Activated CD4-positive, alpha-beta memory T cell treated with anti-CD3 and anti-CD28 coated beads for 36 hours (primary cell): ENCODE measurements at regions of chr1 and their contacts with region 1.

Region 1: DNA sequence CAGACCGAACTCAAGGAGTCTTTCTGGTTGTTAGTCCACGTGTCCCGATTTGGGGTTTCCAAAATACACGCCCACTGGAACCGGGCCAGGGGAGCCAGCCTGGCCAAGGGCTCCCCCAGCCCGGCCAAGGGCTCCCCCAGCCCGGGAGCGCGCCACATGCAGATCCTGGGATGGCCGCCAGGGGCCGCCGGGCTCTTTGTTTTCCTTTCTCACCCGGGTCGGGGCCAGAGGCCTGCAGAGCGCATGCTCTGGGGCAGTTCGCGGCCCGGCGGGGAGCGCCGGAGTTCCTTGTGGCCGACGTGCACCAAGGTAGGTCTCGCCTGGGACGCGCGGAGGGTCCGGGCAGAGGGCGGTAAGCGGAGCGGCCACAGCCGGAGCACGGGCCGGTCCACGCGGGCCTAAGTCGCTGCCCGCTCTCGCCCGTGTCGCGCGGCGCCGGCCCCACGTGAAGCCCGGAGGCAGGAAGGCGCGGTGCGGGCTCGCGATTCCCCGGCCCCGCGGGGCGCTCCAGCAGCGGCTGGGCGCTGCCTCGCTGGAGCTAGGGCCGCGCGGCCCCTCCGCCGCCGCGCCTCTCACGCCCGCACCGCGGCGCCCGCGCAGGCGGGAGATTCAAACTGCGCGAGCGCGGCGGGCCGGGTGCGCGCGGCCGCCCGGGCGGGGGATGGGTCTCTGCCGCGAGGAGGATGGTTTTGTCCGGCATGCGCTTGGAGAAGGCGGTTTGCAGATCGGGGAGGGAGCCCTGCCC is 12.3 kb downstream of the RCC1 start:
- DNase-seq: peak; percentile 93
- H3K4me3 Mint-ChIP-seq: peak overlapping the region; percentile 88
- H3K27ac Mint-ChIP-seq: peak overlapping the region; percentile 93
- H3K4me1 Mint-ChIP-seq: peaks cover 41% of the 10 kb centered on the region
- H3K27me3 Mint-ChIP-seq: no peaks in the 10 kb centered on the region

Region 2: DNA sequence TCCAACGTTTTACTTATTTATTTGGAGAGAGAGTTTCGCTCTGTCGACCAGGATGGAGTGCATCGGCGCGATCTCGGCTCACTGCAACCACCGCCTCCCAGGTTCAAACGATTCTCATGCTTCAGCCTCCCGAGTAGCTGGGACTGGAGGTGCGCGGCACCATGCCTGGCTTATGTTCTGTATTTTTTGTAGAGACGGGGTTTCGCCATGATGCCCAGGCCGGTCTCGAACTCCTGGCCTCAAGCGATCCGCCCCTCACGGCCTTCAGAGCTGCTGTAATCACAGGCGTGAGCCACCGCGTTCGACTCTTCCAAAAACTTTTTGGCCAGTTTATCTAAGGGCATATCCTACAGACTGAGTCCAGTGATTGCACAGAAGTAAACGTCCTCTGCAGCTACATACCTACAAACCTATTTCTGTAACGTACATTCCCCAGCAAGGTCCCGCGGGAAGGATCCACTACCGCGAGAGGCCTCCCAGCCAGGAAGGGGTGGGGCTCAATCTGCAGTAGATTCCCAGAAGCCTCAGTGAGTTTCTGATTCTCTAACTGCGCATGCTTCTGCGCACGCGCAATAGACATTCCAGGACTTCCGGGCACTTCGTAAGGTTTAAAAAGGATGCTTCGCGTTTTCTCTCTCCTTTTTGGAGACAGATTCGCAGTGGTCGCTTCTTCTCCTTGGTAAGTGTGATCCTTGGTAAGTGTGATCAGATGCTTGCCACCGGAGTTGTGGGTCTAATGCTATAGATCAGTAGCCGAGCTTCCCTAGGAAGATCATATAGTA is 12.6 kb before region 1 on chr1 and contains the start of gene RCC1:
- CTCF ChIA-PET with region 1: interaction called, 6 read pairs
- POLR2A ChIA-PET with region 1: interaction called, 31 read pairs
- intact Hi-C with region 1: loop called (anchors 1 kb)
- DNase-seq: peak; percentile 98
- H3K4me3 Mint-ChIP-seq: peak within 1 kb of the TSS; percentile 97
- H3K27ac Mint-ChIP-seq: peak within 1 kb of the TSS; percentile 97
- H3K4me1 Mint-ChIP-seq: peaks cover 38% of the 10 kb centered on the region
- H3K27me3 Mint-ChIP-seq: peaks cover 6% of the 10 kb centered on the region
- total RNA-seq, gene RCC1: 83.5 to 86.1 TPM

Region 3: DNA sequence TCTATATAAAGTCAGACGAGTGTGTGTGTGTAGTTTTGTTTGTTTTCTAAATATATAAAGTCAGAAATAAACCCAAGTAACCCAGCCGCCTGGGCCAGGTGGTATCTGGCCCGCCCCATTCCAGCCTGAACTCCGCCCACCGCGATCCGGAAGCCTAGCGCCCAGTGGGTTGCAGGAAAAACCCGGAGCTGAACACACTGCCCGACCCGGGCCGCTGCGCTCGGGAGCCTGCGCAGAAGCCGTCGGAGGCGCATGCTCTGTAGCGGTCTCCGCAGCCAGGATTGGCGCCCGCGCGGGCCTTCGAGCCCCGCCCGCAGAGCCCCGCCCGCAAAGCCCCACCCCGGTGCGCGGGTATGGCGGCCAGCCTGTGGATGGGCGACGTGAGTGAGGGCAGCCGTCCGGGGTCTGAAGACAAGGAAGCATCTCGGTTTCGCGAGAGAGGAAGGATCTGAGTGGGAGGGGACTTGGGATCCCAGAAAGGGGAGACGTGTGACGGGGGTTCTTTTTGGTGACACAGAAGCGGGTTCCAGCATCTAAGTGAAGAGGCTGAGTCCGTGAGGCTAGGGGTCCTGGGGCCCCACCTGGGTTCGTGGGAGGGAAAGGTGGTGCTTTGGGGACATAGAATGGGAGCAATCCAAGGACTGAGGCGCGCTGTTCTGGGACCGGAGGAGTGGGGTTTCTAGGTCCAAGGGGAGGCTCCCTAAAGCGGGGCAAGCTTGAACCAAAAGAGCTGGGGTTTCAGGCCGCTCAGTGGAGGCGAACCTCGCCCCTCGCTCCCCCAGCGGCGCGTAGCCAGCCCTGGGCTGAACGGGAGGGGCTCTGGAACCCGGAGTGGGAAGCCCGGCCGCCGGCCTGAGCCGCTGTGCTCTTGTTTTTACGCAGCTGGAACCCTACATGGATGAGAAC is 34.8 kb after region 1 on chr1 and contains the start of gene TRNAU1AP:
- CTCF ChIA-PET with region 1: interaction called, 14 read pairs
- POLR2A ChIA-PET with region 1: interaction called, 8 read pairs
- intact Hi-C with region 1: loop called (anchors 1 kb)
- DNase-seq: peak; percentile 99
- H3K4me3 Mint-ChIP-seq: peak within 1 kb of the TSS; percentile 98
- H3K27ac Mint-ChIP-seq: peak within 1 kb of the TSS; percentile 96
- H3K4me1 Mint-ChIP-seq: peaks cover 17% of the 10 kb centered on the region
- H3K27me3 Mint-ChIP-seq: no peaks in the 10 kb centered on the region
- total RNA-seq, gene TRNAU1AP: 57.3 to 59.6 TPM

Region 4: DNA sequence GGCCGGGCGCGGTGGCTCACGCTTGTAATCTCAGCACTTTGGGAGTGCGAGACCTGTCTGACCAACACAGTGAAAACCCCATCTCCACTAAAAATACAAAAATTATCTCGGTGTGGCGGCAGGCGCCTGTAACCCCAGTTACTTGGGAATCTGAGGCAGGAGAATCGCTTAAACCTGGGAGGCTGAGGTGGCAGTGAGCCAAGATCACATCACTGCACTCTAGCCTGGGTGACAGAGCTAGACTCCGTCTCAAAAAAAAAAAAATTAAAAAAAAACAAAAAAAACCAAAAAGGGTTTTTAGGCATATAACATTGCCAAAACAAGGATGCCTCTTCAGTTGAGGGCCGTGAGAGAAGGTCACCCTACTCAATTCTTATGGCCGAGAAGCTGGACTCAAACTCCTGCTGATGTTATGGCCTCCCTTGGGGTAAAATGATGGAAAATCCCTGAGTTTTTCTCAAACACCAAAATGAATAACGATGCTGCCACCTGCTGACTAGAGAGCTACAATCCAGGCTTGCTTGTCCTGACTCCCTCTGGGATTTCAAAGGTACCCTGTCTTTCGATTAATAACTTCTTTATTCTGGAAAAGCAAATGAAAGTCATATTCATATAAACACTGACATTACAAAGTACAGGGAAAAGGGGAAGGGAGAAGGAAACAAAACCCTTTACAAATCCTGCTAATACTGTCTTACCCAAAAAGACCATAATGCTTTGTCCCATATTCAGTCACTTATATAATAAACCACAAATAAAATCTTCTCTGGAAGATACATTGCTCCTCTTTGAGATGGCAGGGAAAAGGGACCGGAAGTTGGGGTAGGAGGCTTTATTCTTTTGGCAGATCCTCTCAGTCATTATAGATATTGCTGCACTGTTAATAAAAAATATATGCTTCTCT is 84.6 kb after region 1 on chr1:
- CTCF ChIA-PET with region 1: interaction called, 5 read pairs
- POLR2A ChIA-PET with region 1: no interaction called
- intact Hi-C with region 1: loop called (anchors 2 kb)
- DNase-seq: peak; percentile 38
- H3K4me3 Mint-ChIP-seq: no peak overlapping the region
- H3K27ac Mint-ChIP-seq: no peak overlapping the region
- H3K4me1 Mint-ChIP-seq: peaks cover 11% of the 10 kb centered on the region
- H3K27me3 Mint-ChIP-seq: no peaks in the 10 kb centered on the region